ENCODE measurements at regions of chr6 and their contacts with region 1.

Region 1: DNA sequence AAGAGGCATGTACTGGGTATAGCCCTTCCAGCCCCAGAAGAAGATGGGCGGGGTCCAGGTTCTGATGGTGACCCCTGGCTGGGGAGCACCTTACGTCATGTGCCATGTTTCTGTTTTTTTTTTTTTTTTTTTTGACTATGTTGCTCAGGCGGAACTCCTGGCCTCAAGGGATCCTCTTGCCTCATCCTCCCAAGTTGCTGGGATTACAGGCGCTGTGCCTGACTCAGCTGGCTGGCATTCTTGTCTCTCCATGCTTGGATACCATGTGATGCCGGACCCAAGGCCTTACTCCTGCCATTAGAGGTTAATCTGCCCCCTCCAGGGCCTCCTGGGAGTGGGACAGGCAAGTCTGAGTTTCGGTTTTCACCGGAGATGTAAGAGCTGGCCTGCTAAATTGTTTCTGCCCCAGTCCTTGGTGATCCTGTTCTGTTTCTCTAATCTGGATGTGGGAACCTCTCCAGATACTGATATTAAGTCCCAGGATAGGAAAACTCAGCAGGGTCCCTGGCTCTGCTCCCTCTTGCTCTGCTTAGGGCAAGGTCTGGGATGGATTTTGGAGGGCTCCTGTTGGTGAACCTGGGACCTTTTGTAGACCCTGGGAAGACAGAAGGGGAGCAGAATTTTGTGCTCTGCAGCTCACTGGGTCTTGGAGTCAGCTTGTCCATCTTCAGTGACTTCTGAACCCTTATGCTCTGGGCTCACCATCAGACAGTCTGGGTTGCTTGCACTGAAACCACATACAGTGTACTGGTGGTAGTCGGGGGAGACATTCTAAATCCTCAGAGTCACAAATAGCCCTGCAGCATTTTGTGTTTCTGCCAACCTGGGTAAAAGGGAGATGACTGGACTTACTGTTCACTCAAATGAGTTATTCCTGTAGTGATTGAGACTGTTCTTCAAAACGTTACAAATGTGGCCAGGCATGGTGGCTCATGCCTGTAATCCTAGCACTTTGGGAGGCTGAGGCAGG is 45.1 kb downstream of the PTK7 start:
- DNase-seq: peak; percentile 44
- ATAC-seq: peak; percentile 77
- H3K4me3 ChIP-seq: peak overlapping the region in 1 of 2 experiments; percentile 16; a peak in 1 of 4 replicates
- H3K27ac ChIP-seq: peak overlapping the region; percentile 47
- H3K4me1 ChIP-seq: peaks cover 61 to 73% of the 10 kb centered on the region in 2 experiments
- H3K27me3 ChIP-seq: no peaks in the 10 kb centered on the region
- CTCF ChIP-seq: no peak
- POLR2A ChIP-seq: no peak
- RAD21 ChIP-seq: no peak

Region 2: DNA sequence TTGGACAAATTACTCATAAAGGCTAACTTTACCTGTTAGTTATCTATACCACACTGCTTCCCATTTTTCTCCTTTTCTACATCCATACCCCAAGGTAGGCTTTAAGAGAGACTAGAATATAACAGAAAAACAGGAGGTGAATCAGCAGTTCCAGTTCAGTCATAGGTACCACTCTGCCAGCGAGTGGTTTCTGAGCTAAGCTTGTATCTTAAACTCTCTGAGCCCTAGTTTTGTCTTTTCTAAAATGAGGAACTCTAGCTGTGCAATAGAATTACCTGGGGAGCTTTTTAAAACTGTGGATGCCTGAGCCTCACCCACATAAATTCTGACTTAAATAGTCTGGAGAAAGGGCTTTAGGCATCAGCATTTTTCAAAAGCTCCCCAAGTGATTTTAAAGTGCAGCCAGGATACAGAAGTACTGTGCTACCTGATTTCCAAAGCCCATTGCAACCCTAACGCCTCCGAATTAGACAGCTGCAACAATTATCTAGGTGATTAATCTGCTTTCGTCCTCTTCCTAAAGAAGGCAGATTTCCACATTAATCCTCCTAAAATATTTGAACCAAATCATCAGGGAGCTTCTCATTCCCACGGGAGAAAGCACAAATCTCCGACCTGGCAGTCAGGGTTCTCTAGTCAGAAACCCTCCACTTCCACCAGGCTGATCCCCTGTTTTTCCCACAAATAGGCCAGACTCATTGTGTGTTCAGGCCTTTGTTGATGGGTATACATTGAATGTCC is 279.2 kb before region 1 on chr6:
- CTCF ChIA-PET with region 1: no interaction called
- POLR2A ChIA-PET with region 1: no interaction called
- RAD21 ChIA-PET with region 1: no interaction called
- intact Hi-C with region 1: no loop called
- DNase-seq: no peak
- ATAC-seq: no peak
- H3K4me3 ChIP-seq: no peak overlapping the region
- H3K27ac ChIP-seq: no peak overlapping the region
- H3K4me1 ChIP-seq: no peaks in the 10 kb centered on the region
- H3K27me3 ChIP-seq: no peaks in the 10 kb centered on the region
- CTCF ChIP-seq: no peak
- POLR2A ChIP-seq: no peak
- RAD21 ChIP-seq: no peak

Region 3: GRCh38 chr6:43035495-43036194 is 85.6 kb before region 1 on chr6:
- CTCF ChIA-PET with region 1: no interaction called
- POLR2A ChIA-PET with region 1: no interaction called
- RAD21 ChIA-PET with region 1: no interaction called
- intact Hi-C with region 1: no loop called
- DNase-seq: no peak
- ATAC-seq: no peak
- H3K4me3 ChIP-seq: no peak overlapping the region
- H3K27ac ChIP-seq: no peak overlapping the region
- H3K4me1 ChIP-seq: no peaks in the 10 kb centered on the region
- H3K27me3 ChIP-seq: no peaks in the 10 kb centered on the region
- CTCF ChIP-seq: no peak
- POLR2A ChIP-seq: no peak
- RAD21 ChIP-seq: no peak

Region 4: GRCh38 chr6:43075670-43076463 is 45.4 kb before region 1 on chr6 and contains the start of gene PTK7:
- CTCF ChIA-PET with region 1: no interaction called
- POLR2A ChIA-PET with region 1: no interaction called
- RAD21 ChIA-PET with region 1: interaction called in 1 of 2 experiments, 3 read pairs
- intact Hi-C with region 1: loop called (anchors 5 kb)
- DNase-seq: no peak
- ATAC-seq: peak; percentile 80
- H3K4me3 ChIP-seq: peak within 1 kb of the TSS; percentile 89 to 98
- H3K27ac ChIP-seq: peak within 1 kb of the TSS; percentile 86
- H3K4me1 ChIP-seq: peaks cover 17 to 27% of the 10 kb centered on the region in 2 experiments
- H3K27me3 ChIP-seq: no peaks in the 10 kb centered on the region
- CTCF ChIP-seq: no peak
- POLR2A ChIP-seq: no peak
- RAD21 ChIP-seq: no peak
- total RNA-seq, gene PTK7: 105 TPM

Region 5: GRCh38 chr6:43274916-43275597 is 153.8 kb after region 1 on chr6:
- CTCF ChIA-PET with region 1: no interaction called
- POLR2A ChIA-PET with region 1: no interaction called
- RAD21 ChIA-PET with region 1: no interaction called
- intact Hi-C with region 1: no loop called
- DNase-seq: no peak
- ATAC-seq: no peak
- H3K4me3 ChIP-seq: no peak overlapping the region
- H3K27ac ChIP-seq: no peak overlapping the region
- H3K4me1 ChIP-seq: peaks cover 0 to 12% of the 10 kb centered on the region in 2 experiments; a peak in 2 of 4 replicates
- H3K27me3 ChIP-seq: no peaks in the 10 kb centered on the region
- CTCF ChIP-seq: no peak
- POLR2A ChIP-seq: no peak
- RAD21 ChIP-seq: no peak

Region 6: GRCh38 chr6:43383021-43383667 is 261.9 kb after region 1 on chr6:
- CTCF ChIA-PET with region 1: no interaction called
- POLR2A ChIA-PET with region 1: no interaction called
- RAD21 ChIA-PET with region 1: no interaction called
- intact Hi-C with region 1: no loop called
- DNase-seq: no peak
- ATAC-seq: no peak
- H3K4me3 ChIP-seq: no peak overlapping the region
- H3K27ac ChIP-seq: no peak overlapping the region
- H3K4me1 ChIP-seq: no peaks in the 10 kb centered on the region
- H3K27me3 ChIP-seq: no peaks in the 10 kb centered on the region
- CTCF ChIP-seq: no peak
- POLR2A ChIP-seq: no peak
- RAD21 ChIP-seq: no peak

Measured in HCT116 (cell line).